A673 (cell line): ENCODE measurements at regions of chr6 and their contacts with region 1.

Region 1: DNA sequence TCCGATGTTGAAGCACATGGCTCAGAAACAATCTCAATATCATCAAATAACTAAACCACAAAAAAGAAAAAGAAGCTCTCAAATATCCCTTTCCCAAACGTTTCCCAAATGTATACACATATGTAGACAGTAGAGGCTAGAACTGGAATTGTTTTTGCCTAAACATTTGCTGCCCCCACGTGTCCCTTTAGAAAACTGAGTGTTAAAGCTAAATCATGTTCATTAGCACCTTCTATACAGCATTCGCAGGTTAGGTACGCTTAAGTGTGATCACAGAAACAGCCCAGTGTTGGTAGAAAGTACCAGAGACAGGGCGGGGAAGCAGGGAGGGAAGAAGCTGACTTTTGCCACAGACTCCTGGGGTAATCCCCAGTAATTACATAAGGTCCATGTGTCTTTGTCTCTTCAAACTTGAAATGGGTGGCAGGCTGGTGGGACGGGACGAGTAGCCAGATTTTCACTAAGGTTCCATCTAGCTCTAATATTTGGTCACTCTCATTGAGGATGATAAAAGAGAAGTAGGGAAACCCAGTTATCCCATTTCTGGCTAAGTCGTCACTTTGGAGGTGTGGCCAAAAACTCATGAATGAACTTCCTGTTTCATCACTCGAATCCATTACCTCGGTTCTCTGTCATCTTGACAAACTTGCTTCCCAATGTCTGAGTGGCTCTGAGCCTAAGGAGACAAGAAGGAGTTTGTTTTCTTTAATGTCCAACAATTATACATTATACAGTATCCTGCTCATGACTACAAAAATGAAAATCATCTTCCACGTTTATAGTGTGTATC is 15.0 kb upstream of the TFAP2A start:
- DNase-seq: peak; percentile 85
- H3K4me3 ChIP-seq: peak overlapping the region; percentile 2
- H3K27ac ChIP-seq: peak overlapping the region; percentile 51
- H3K4me1 ChIP-seq: peaks cover 38% of the 10 kb centered on the region
- H3K27me3 ChIP-seq: no peaks in the 10 kb centered on the region
- CTCF ChIP-seq: peak; percentile 78

Region 2: DNA sequence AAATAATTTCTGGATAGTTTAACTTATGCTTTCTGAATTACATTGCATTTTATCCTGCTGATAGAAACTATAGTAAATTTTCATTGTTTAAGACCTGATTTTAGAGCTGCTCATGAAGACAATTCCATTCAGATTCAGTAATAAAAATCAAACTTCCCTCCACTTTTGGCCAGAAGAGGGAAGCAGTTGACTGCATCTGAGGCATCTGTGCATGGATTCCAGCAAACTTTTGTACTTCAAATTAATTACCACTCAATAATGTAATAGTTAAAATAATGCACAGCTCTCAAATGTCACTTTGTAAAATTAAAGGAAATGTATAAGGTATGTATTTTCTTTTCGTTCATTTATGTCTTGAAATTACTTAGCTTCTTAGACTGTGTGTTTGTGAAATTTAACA is 1930.3 kb before region 1 on chr6:
- CTCF ChIA-PET with region 1: interaction called, 4 read pairs
- POLR2A ChIA-PET with region 1: no interaction called
- intact Hi-C with region 1: loop called (anchors 2 kb)
- DNase-seq: peak; percentile 64
- H3K4me3 ChIP-seq: no peak overlapping the region
- H3K27ac ChIP-seq: no peak overlapping the region
- H3K4me1 ChIP-seq: peaks cover 7% of the 10 kb centered on the region
- H3K27me3 ChIP-seq: no peaks in the 10 kb centered on the region
- CTCF ChIP-seq: peak; percentile 84

Region 3: DNA sequence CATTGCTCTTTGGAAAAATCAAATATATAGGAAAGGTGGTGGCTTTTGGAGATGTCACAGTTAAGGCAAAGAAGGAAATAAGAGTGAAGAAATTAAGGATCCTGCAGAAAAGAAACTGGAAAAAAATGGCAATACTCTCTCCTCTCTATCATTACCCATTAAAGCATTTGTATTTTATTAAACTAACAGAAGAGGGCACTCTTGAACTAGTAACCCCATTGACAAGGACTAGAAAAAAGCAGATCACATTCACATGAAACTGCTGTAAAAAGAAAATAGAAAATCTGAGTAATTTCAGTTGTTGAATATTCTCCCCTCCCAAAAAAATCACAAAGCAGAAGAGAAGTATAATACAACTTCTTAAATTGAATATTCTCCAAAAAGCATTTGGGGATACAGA is 1890.4 kb before region 1 on chr6:
- CTCF ChIA-PET with region 1: interaction called, 3 read pairs
- POLR2A ChIA-PET with region 1: no interaction called
- intact Hi-C with region 1: loop called (anchors 5 kb)
- DNase-seq: peak; percentile 72
- H3K4me3 ChIP-seq: no peak overlapping the region
- H3K27ac ChIP-seq: no peak overlapping the region
- H3K4me1 ChIP-seq: no peaks in the 10 kb centered on the region
- H3K27me3 ChIP-seq: no peaks in the 10 kb centered on the region
- CTCF ChIP-seq: peak; percentile 62

Region 4: DNA sequence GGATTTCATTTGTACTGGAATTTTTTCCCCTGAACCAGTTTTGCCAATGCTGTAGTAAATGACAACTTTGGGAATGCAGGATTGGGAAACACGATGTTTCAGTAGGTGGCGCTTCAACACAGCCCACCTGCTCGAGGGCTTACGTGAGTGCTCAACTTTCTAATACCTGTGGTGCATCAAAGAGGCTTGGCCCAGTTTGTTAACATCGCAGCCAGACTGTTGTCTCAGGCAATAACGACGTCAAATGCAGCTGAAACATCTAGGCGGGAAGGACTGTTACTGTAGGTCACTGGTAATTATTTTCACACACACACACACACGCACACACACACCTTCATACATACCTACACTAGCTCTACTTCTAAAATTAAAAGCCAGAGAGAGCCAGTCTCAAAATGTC is 1179.0 kb before region 1 on chr6:
- CTCF ChIA-PET with region 1: interaction called, 3 read pairs
- POLR2A ChIA-PET with region 1: no interaction called
- intact Hi-C with region 1: loop called (anchors 5 kb)
- DNase-seq: peak; percentile 59
- H3K4me3 ChIP-seq: no peak overlapping the region
- H3K27ac ChIP-seq: no peak overlapping the region
- H3K4me1 ChIP-seq: peaks cover 7% of the 10 kb centered on the region
- H3K27me3 ChIP-seq: no peaks in the 10 kb centered on the region
- CTCF ChIP-seq: peak; percentile 70

Region 5: GRCh38 chr6:9540534-9541126 is 889.2 kb before region 1 on chr6:
- CTCF ChIA-PET with region 1: no interaction called
- POLR2A ChIA-PET with region 1: no interaction called
- intact Hi-C with region 1: loop called (anchors 2 kb)
- DNase-seq: peak; percentile 86
- H3K4me3 ChIP-seq: no peak overlapping the region
- H3K27ac ChIP-seq: no peak overlapping the region
- H3K4me1 ChIP-seq: no peaks in the 10 kb centered on the region
- H3K27me3 ChIP-seq: no peaks in the 10 kb centered on the region
- CTCF ChIP-seq: peak; percentile 85

Region 6: DNA sequence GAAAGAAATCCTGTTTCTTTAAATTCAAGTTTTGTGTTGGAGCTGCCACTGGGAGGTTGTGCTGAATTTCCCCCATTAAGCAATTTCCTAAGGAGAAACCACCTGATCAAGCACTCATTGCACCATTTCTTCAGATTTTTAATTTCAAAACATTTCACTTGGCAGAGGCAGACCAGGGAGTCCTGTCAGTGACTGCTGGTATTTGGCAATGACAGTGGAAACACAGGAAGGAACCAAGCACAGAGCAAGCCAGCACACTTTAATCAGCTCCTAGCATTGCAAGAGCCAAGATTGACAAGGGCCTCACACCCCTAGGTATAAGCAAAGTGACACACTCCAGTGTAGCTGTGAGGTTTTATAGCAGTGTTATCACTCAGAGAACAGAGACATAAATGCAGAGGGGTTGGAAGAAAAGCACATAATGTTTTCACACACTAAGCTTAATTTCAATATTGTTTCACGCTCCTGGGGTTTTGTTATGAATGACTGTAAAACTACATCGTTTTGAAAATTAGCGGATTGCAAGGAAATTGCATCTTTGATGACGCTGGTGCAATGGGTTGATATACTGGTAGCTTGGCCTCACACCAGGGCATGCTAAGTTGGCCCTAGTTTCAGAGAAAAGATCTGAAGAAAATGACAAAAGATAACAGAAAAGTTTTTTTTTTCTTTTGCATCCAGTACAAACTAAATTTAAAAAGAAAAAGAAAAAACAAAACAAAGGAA is 783.3 kb before region 1 on chr6:
- CTCF ChIA-PET with region 1: no interaction called
- POLR2A ChIA-PET with region 1: no interaction called
- intact Hi-C with region 1: no loop called
- DNase-seq: peak; percentile 50
- H3K4me3 ChIP-seq: no peak overlapping the region
- H3K27ac ChIP-seq: no peak overlapping the region
- H3K4me1 ChIP-seq: no peaks in the 10 kb centered on the region
- H3K27me3 ChIP-seq: no peaks in the 10 kb centered on the region
- CTCF ChIP-seq: no peak

Region 7: DNA sequence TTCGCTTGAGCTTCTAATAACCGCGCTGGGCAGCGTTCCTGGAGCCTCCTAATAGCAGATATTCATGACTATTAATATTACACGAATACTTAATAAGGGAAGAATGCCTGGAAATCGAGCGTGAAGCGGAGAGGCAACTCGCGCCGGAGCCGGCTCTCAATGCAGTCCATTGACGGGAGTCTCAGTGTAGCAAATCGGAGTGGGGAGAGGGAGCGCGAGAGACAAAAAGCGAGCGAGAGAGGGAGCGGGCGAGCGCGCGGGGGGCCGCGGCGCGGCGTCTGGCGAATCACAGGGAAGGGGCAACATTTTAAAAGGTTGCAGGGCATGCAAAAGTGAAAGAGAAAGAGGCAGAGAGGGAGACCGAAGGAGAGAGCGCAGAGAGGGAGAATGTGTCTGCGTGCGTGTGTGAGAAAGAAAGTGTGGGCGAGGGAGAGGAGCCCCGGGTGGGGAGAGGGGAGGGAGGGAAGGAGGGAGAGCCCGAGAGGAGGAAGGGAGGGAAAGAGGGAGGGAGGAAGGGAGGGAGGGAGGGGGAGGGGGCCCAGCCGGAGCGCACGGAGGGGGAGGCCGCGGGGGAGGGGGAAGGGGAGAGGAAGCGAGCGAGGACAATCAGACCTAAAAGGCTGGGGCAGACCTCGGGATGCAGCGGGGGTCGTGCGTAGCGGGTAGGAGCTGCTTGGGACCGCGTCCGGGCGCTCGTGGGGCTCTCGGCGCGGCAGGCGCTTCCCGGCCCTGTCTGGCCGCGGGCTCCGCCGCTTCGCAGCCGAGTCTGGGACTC is 17.7 kb before region 1 on chr6:
- CTCF ChIA-PET with region 1: interaction called, 18 read pairs
- POLR2A ChIA-PET with region 1: interaction called, 3 read pairs
- intact Hi-C with region 1: no loop called
- DNase-seq: peak; percentile 95
- H3K4me3 ChIP-seq: peak overlapping the region; percentile 75
- H3K27ac ChIP-seq: peak overlapping the region; percentile 83
- H3K4me1 ChIP-seq: peaks cover 40% of the 10 kb centered on the region
- H3K27me3 ChIP-seq: no peaks in the 10 kb centered on the region
- CTCF ChIP-seq: no peak